Right cardiac atrium (tissue), 5 donors: ENCODE measurements at regions of chr5 and their contacts with region 1.

Region 1: DNA sequence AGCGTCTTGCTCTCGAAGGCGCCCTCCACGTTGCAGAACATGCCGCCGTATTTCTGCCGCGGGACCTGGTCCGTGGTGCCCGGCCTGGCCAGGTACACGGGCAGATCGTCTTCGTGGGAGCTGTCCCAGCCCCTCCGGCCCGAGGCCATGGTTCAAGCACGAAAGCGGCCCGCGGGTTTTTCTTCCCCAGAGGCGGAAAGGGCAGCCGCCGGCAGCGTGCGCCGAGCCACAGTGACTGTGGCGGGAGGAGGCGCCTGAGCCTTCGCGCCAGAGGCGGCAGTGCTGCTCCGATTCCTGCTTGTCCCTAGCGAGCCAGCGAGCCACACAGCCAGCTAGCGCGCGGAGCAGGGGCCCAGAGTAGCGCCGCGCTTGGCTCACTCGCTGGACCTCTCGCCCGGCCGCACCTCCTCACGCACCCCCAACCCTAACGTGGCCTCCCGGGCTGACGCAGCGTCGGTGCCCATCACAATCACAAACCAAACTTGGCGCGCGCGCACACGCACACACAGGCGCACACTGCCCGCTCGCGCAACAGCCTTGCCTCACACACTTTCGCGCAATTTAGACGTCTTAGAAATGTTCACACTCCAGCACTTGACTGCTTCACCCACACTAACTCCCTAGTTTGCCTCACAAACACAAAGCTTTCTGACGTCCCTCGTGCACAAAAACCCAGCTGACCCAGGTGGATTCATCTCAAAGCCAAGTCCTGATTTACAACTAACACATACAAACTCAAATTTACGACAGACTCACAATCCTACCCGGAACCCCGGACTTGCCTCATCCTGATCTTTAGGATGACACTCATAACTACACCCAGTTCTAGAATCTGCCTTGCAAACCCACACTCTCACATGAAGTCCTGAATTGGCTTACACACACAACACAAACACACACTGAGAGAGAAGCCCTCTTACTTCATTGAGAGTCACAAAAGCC is at the start of gene DPYSL3:
- DNase-seq: peak; percentile 86 to 93 (median 93)
- ATAC-seq: peak; percentile 96 to 97
- H3K4me3 ChIP-seq: peak within 1 kb of the TSS; percentile 74
- H3K27ac ChIP-seq: peak within 1 kb of the TSS; percentile 40
- H3K4me1 ChIP-seq: no peaks in the 10 kb centered on the region
- H3K27me3 ChIP-seq: no peaks in the 10 kb centered on the region
- total RNA-seq, gene DPYSL3: 40.9 to 95.1 (median 54.3) TPM

Region 2: GRCh38 chr5:147453875-147454814 is 55.8 kb before region 1 on chr5:
- intact Hi-C with region 1: loop called in 3 of 4 experiments (anchors 5 to 10 kb)
- DNase-seq: peak; percentile 91 to 97 (median 97)
- ATAC-seq: peak; percentile 93 to 94
- H3K4me3 ChIP-seq: peak overlapping the region; percentile 65
- H3K27ac ChIP-seq: peak overlapping the region; percentile 81
- H3K4me1 ChIP-seq: no peaks in the 10 kb centered on the region
- H3K27me3 ChIP-seq: no peaks in the 10 kb centered on the region

Region 3: DNA sequence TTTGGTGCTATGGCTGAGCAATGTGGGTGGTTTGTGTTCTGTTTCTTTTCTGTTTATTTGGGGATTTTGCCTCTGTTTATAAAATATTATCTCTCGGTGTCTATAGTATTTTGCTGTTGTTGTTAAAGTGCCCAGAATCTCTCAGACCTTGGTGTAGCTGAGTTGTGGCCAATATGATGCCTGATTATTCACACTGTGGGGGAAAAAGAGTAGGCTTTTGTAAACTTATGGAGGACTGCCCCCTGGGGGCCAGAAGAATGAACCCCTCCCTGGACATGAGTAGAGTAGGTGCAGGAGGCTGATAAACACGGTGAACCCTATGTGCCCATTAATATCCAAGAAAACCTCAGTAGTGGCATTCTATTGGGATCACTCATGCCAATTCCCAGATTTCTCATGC is 48.8 kb after region 1 on chr5:
- intact Hi-C with region 1: loop called in 2 of 4 experiments (anchors 5 kb)
- DNase-seq: peak; percentile 69 to 84 (median 71)
- ATAC-seq: peak; percentile 86 to 87
- H3K4me3 ChIP-seq: no peak overlapping the region
- H3K27ac ChIP-seq: no peak overlapping the region
- H3K4me1 ChIP-seq: peaks cover 1% of the 10 kb centered on the region
- H3K27me3 ChIP-seq: no peaks in the 10 kb centered on the region